ENCODE measurements at regions of chr10 and their contacts with region 1.

Region 1: GRCh38 chr10:103895411-103896186 is 22.4 kb downstream of the STN1 start:
- DNase-seq: no peak
- ATAC-seq: peak in 6 of 8 donors; percentile 18 to 61 (median 26)
- H3K4me3 ChIP-seq: peak overlapping the region in 1 of 10 donors; percentile 4
- H3K27ac ChIP-seq: peak overlapping the region in 9 of 10 donors; percentile 64 to 88 (median 78)
- H3K4me1 ChIP-seq: peaks cover 14 to 73% (median 43%) of the 10 kb centered on the region in 9 donors
- H3K27me3 ChIP-seq: no peaks in the 10 kb centered on the region
- CTCF ChIP-seq: no peak

Region 2: DNA sequence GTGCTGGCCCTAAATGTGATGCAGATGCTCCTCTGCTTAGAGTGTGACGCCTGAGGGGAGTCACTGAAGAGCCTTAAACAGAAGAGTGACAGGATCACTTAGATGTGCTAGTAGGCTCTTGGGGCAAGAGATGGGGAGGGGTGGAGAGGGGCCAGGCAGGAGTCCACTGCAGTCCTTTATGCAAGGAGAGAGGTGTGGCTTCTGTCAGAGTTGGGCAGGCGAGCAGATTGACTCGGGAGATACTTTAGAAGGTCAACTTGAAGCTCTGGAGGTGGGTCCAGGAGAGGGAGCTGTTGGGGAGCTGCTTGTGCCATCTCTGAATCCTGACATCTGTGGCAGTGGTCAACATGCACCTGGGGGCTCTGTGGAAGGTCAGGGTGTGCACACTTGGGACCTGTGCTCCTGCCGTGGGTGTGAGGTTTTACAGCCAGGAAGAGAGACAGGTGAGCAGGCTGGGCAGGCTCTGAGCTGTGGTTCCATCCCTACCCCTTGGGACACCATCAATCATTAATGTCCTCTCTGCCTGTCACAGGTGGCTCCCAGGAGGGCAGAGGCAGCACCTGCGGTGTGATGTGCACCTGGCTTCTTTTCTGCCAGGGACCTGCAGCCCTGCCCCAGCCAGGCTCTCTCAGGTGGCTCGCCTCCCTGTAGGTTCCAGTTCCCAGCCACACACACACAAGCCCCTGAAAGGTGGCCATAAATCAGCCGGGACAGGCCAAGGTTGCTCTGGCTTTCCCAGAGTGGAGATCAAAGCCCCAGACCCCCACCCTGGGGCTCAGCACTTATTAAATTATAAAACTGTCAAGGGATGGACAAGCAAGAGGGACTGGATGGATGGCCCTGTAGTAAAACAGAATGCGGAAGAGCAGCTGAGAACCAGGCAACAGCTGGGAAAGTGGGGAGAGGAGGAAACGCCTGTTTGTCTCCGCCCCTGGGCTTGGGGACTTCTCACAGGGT is 388.1 kb before region 1 on chr10:
- intact Hi-C with region 1: no loop called
- DNase-seq: no peak
- ATAC-seq: no peak
- H3K4me3 ChIP-seq: no peak overlapping the region
- H3K27ac ChIP-seq: no peak overlapping the region
- H3K4me1 ChIP-seq: peaks cover 0 to 14% (median 7%) of the 10 kb centered on the region in 9 donors
- H3K27me3 ChIP-seq: peaks cover 0 to 6% (median 0%) of the 10 kb centered on the region in 7 donors
- CTCF ChIP-seq: no peak

Region 3: DNA sequence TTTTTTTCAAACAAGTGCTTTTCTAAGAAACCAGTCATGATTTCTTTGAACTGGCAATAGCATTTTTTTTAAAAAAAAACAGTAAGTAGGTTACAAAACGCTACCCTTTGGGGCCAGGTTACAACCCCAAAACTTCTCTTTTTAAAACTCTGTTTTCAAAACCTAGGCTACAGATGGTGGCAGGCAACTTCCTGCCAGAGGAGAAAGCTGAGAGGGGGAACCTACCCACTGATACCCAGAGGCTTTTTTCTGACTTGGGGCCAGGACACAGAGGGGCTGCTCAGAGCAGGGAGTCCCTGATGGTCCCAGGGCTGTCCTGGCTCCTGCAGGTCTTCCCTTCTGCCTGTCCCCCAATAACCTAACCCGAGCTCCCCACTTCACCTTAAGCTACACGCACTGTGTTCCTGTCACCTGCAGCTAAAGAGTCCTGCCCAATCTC is 15.4 kb after region 1 on chr10:
- intact Hi-C with region 1: loop called in 1 of 10 experiments (anchors 2 kb)
- DNase-seq: no peak
- ATAC-seq: no peak
- H3K4me3 ChIP-seq: no peak overlapping the region
- H3K27ac ChIP-seq: peak overlapping the region in 4 of 10 donors; percentile 27 to 89 (median 41)
- H3K4me1 ChIP-seq: peaks cover 13 to 73% (median 32%) of the 10 kb centered on the region in 9 donors
- H3K27me3 ChIP-seq: no peaks in the 10 kb centered on the region
- CTCF ChIP-seq: no peak

Region 4: DNA sequence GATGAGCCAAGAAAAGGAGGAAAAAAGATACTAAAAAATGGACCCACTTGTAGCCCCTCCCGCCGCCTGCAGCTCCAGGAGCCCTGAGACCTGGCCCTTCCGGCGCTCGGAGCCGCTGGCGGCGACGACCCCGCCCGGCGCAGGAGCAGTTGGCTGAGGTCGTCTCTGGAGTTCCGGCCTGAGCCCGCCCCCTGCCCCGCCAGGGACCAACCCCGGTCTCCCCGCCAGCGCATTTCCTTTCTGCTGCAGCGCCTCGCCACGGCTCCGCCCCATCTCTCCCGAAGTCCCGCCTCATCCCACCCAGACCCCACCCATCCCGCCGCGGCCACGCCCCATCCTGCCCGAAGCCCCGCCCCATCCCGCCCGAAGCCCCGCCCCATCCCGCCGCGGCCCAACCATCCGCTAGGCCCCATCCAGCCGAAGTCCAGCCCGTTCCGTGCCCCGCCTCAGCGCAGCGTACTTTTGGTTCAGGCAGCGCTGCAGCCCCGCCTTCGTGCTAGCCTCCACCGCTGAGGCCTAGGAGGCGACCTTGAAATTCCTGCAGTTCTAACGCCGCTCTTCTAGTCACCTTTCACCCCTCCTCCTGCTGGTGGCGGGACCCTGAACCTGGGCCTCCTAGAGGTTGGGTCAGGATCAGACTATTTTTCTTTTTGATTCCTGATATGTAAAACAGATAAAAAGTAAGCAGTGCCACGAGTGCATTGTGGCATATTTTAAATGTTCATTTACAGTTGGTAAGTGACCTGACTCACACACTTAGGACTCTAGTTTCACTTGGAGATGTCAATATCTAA is 22.7 kb after region 1 on chr10 and contains the start of gene STN1:
- intact Hi-C with region 1: loop called in 2 of 10 experiments (anchors 1 kb)
- DNase-seq: peak; percentile 97 to 99
- ATAC-seq: peak; percentile 97 to 99 (median 98)
- H3K4me3 ChIP-seq: peak within 1 kb of the TSS; percentile 48 to 88 (median 79)
- H3K27ac ChIP-seq: peak within 1 kb of the TSS; percentile 92 to 99 (median 96)
- H3K4me1 ChIP-seq: peaks cover 10 to 51% (median 34%) of the 10 kb centered on the region in 9 donors
- H3K27me3 ChIP-seq: no peaks in the 10 kb centered on the region
- CTCF ChIP-seq: peak in 3 of 9 donors; percentile 5 to 13 (median 10)
- total RNA-seq, gene STN1: 24.7 to 38.7 (median 31.4) TPM

Region 5: GRCh38 chr10:103966671-103967447 is 71.3 kb after region 1 on chr10 and contains the start of gene SLK:
- intact Hi-C with region 1: loop called in 4 of 10 experiments (anchors 5 kb)
- DNase-seq: peak; percentile 83 to 89
- ATAC-seq: peak; percentile 95 to 99 (median 96)
- H3K4me3 ChIP-seq: peak within 1 kb of the TSS; percentile 69 to 95 (median 86)
- H3K27ac ChIP-seq: peak within 1 kb of the TSS; percentile 89 to 99 (median 97)
- H3K4me1 ChIP-seq: peaks cover 0 to 47% (median 31%) of the 10 kb centered on the region in 9 donors
- H3K27me3 ChIP-seq: no peaks in the 10 kb centered on the region
- CTCF ChIP-seq: no peak
- total RNA-seq, gene SLK: 30.4 to 63.6 (median 44.2) TPM

Region 6: GRCh38 chr10:104028146-104028545 is 132.5 kb after region 1 on chr10:
- intact Hi-C with region 1: loop called in 1 of 10 experiments (anchors 10 kb)
- DNase-seq: peak in 1 of 2 donors; percentile 41
- ATAC-seq: peak; percentile 83 to 92 (median 86)
- H3K4me3 ChIP-seq: no peak overlapping the region
- H3K27ac ChIP-seq: peak overlapping the region in 7 of 10 donors; percentile 49 to 89 (median 83)
- H3K4me1 ChIP-seq: peaks cover 3 to 49% (median 13%) of the 10 kb centered on the region in 9 donors
- H3K27me3 ChIP-seq: no peaks in the 10 kb centered on the region
- CTCF ChIP-seq: peak; percentile 7 to 65 (median 44)

Region 7: GRCh38 chr10:104328896-104329710 is 433.5 kb after region 1 on chr10:
- intact Hi-C with region 1: loop called in 1 of 10 experiments (anchors 10 kb)
- DNase-seq: peak in 1 of 2 donors; percentile 77
- ATAC-seq: peak; percentile 26 to 58 (median 50)
- H3K4me3 ChIP-seq: peak overlapping the region in 9 of 10 donors; percentile 5 to 41 (median 35)
- H3K27ac ChIP-seq: peak overlapping the region; percentile 90 to 100 (median 99)
- H3K4me1 ChIP-seq: peaks cover 75 to 100% (median 100%) of the 10 kb centered on the region in 9 donors
- H3K27me3 ChIP-seq: no peaks in the 10 kb centered on the region
- CTCF ChIP-seq: no peak

Measured in heart right ventricle (tissue), 16 donors.